ENCODE measurements at regions of chr11 and their contacts with region 1.

Region 1: GRCh38 chr11:14300661-14301304 is 58.2 kb downstream of the RRAS2 start:
- DNase-seq: peak in 4 of 5 donors; percentile 56 to 78 (median 64)
- H3K4me3 ChIP-seq: no peak overlapping the region
- H3K27ac ChIP-seq: no peak overlapping the region
- H3K4me1 ChIP-seq: peaks cover 0 to 7% (median 0%) of the 10 kb centered on the region in 3 donors
- H3K27me3 ChIP-seq: no peaks in the 10 kb centered on the region
- CTCF ChIP-seq: peak; percentile 90

Region 2: GRCh38 chr11:14454861-14455632 is 154.3 kb after region 1 on chr11:
- intact Hi-C with region 1: loop called (anchors 5 kb)
- DNase-seq: peak in 4 of 5 donors; percentile 9 to 33 (median 30)
- H3K4me3 ChIP-seq: no peak overlapping the region
- H3K27ac ChIP-seq: no peak overlapping the region
- H3K4me1 ChIP-seq: no peaks in the 10 kb centered on the region
- H3K27me3 ChIP-seq: no peaks in the 10 kb centered on the region
- CTCF ChIP-seq: peak; percentile 52

Measured in kidney (tissue), 22 donors.